AG04450 (cell line): ENCODE measurements at regions of chr2 and their contacts with region 1.

Region 1: GRCh38 chr2:170873035-170873692 is 55.9 kb upstream of the GORASP2 start:
- DNase-seq: peak; percentile 26
- H3K4me3 ChIP-seq: peak overlapping the region; percentile 31
- H3K27ac ChIP-seq: no peak overlapping the region
- H3K27me3 ChIP-seq: peaks cover 5% of the 10 kb centered on the region
- CTCF ChIP-seq: peak; percentile 97

Region 2: DNA sequence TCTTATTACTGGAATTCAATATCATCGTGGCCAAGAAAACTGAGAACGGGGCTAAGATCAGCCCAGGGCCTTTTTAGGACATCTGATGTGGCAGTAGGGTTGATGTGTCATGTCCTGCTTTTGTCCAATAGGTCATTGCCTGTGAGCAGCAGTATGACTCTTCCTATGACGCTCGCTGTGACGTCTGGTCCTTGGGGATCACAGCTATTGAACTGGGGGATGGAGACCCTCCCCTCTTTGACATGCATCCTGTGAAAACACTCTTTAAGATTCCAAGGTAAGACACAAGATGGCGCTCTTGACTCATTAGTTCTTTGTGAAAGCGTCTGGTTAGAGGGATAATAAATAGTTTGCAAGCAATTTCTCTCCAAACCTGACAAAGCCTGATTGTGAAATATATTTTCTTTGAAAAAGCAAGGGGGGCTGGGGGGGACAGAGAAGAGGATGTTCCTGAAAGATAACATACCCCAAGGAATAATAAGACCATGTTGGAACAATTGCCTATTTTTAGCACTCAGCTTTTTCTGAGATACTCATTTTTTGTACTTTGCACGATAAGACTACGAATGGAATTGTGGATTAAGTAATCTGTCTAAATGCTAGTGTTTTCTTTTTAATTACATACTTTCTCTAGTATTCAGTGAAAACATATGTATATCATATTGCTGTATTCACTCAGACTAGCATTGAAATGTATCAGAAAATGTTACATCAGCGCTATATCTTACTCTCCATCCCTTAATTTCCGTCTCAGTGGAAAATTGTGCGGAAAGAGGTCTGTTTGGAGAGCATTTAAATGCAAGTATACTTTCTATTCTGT is 637.1 kb before region 1 on chr2:
- CTCF ChIA-PET with region 1: interaction called, 20 read pairs
- POLR2A ChIA-PET with region 1: no interaction called
- DNase-seq: no peak
- H3K4me3 ChIP-seq: no peak overlapping the region
- H3K27ac ChIP-seq: no peak overlapping the region
- H3K27me3 ChIP-seq: peaks cover 6% of the 10 kb centered on the region
- CTCF ChIP-seq: peak; percentile 62

Region 3: GRCh38 chr2:170369894-170370293 is 503.3 kb before region 1 on chr2:
- CTCF ChIA-PET with region 1: interaction called, 29 read pairs
- POLR2A ChIA-PET with region 1: no interaction called
- DNase-seq: no peak
- H3K4me3 ChIP-seq: no peak overlapping the region
- H3K27ac ChIP-seq: no peak overlapping the region
- H3K27me3 ChIP-seq: peaks cover 8% of the 10 kb centered on the region
- CTCF ChIP-seq: peak; percentile 39

Region 4: GRCh38 chr2:170862286-170862902 is 10.8 kb before region 1 on chr2:
- CTCF ChIA-PET with region 1: interaction called, 34 read pairs
- POLR2A ChIA-PET with region 1: no interaction called
- DNase-seq: no peak
- H3K4me3 ChIP-seq: no peak overlapping the region
- H3K27ac ChIP-seq: no peak overlapping the region
- H3K27me3 ChIP-seq: no peaks in the 10 kb centered on the region
- CTCF ChIP-seq: no peak

Region 5: DNA sequence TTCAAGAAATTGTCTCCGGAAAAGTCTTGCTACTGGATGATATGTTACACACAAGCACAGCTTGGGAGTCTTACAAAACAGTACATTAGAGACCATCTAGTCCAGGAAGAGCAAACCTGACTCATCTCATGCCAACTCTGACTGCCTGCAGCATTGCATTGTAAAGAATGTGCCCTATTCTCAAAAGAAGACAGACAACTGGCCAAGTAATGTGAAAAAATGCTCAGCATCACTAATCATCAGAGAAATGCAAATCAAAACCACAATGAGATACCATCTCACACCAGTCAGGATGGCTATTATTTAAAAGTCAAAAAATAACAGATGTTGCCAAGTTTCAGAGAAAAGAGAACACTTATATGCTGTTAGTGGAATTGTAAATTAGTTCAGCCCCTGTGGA is 13.2 kb after region 1 on chr2:
- CTCF ChIA-PET with region 1: interaction called, 21 read pairs
- POLR2A ChIA-PET with region 1: no interaction called
- DNase-seq: no peak
- H3K4me3 ChIP-seq: no peak overlapping the region
- H3K27ac ChIP-seq: no peak overlapping the region
- H3K27me3 ChIP-seq: peaks cover 4% of the 10 kb centered on the region
- CTCF ChIP-seq: no peak